ENCODE measurements at regions of chr18 and their contacts with region 1.

Region 1: DNA sequence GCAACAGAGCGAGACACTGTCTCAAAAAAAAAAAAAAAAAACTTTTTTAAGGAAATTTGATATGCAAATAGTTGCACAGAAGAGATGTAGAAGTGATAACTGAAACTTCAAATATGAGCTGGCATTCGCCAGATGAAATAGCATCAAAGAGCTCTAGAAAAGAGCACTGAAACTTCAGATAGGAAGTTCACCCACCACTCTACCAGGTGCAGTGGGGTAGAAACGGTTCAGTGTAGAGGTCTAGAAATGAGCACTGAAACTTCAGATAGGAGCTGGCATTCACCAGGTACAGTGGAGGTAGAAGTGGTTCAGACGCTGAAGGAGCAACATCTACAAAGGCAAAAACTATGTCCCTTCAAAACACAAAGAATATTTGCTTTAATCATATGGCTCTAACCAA is 9.0 kb upstream of the ONECUT2 start:
- DNase-seq: no peak
- ATAC-seq: no peak
- H3K4me3 ChIP-seq: no peak overlapping the region
- H3K27ac ChIP-seq: no peak overlapping the region
- H3K4me1 ChIP-seq: no peaks in the 10 kb centered on the region
- H3K27me3 ChIP-seq: peaks cover 74% of the 10 kb centered on the region
- CTCF ChIP-seq: no peak

Region 2: DNA sequence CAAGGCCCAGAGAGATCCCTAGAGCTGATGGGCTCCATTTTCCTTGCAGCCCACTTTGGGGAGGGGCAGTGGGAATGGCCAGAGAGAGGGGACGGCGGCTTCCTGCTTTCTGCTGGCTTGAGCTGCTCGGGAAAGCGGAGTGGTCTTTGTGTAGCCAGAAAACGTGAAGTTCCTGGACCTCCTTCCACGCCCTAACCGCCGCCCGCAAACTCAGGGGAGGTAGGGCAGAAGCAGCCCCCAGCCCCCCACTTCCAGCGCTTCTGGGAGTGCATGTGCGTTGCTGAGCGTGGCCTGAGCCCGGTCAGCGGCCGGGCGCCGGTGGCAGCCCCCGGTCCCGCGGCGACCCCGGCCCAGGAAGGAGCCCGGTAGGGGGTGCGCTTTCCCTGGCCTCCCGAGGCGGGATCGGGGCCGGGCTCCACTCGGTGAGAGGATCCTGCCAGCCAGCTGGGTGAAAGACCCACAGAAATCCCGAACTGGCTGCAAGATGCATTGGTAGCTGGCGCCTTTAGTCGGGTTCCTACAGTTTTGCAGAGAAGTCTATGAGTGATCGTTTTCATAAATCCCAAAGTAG is 304.6 kb before region 1 on chr18:
- CTCF ChIA-PET with region 1: no interaction called
- POLR2A ChIA-PET with region 1: interaction called, 17 read pairs
- intact Hi-C with region 1: no loop called
- DNase-seq: no peak
- ATAC-seq: no peak
- H3K4me3 ChIP-seq: no peak overlapping the region
- H3K27ac ChIP-seq: no peak overlapping the region
- H3K4me1 ChIP-seq: no peaks in the 10 kb centered on the region
- H3K27me3 ChIP-seq: peaks cover 63% of the 10 kb centered on the region
- CTCF ChIP-seq: no peak

Measured in PC-3 (cell line).